ENCODE measurements at regions of chr12 and their contacts with region 1.

Region 1: DNA sequence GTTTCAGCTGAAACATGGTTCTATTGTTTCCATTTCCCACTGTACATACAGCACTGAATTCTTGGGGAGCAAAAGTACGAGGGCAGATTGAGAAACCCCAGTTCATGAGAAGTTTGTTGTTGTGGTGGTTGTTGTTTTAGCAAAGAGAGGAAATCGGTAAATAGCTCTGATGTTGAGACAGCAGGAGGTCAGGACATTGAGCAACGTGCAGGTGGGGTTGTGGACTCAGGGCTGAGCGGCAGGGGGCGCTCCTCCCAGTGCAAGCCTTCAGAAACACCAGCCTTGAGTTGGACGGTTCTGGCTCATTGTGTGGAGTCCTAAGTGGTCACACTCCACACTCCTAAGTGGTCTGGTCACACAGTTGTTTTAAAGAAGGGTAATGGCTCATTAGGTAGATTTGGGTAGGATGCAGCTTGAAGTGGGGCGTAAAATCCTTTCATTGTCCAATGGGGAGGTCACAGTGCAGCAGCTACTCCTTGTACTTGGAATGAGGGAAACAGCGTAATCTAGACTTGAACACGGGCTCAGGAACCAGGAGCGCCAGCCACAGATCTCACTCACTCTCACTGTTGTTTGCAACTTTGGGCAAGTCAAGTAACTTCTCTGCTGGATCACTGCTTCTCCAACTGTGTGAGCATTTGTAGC is 14.5 kb upstream of the PWP1 start:
- DNase-seq: peak; percentile 46
- CTCF ChIP-seq: peak; percentile 69

Region 2: GRCh38 chr12:107545737-107546353 is 125.3 kb before region 1 on chr12:
- CTCF ChIA-PET with region 1: no interaction called
- POLR2A ChIA-PET with region 1: no interaction called
- DNase-seq: no peak
- CTCF ChIP-seq: no peak

Region 3: GRCh38 chr12:107570721-107571120 is 100.4 kb before region 1 on chr12:
- CTCF ChIA-PET with region 1: no interaction called
- POLR2A ChIA-PET with region 1: no interaction called
- DNase-seq: no peak
- CTCF ChIP-seq: no peak

Region 4: GRCh38 chr12:107655281-107656065 is 15.6 kb before region 1 on chr12:
- CTCF ChIA-PET with region 1: interaction called, 15 read pairs
- POLR2A ChIA-PET with region 1: no interaction called
- DNase-seq: no peak
- CTCF ChIP-seq: no peak

Region 5: GRCh38 chr12:107685360-107686248 is 14.5 kb after region 1 on chr12 and contains the start of gene PWP1:
- CTCF ChIA-PET with region 1: interaction called, 32 read pairs
- POLR2A ChIA-PET with region 1: no interaction called
- DNase-seq: peak; percentile 97
- CTCF ChIP-seq: no peak

Region 6: DNA sequence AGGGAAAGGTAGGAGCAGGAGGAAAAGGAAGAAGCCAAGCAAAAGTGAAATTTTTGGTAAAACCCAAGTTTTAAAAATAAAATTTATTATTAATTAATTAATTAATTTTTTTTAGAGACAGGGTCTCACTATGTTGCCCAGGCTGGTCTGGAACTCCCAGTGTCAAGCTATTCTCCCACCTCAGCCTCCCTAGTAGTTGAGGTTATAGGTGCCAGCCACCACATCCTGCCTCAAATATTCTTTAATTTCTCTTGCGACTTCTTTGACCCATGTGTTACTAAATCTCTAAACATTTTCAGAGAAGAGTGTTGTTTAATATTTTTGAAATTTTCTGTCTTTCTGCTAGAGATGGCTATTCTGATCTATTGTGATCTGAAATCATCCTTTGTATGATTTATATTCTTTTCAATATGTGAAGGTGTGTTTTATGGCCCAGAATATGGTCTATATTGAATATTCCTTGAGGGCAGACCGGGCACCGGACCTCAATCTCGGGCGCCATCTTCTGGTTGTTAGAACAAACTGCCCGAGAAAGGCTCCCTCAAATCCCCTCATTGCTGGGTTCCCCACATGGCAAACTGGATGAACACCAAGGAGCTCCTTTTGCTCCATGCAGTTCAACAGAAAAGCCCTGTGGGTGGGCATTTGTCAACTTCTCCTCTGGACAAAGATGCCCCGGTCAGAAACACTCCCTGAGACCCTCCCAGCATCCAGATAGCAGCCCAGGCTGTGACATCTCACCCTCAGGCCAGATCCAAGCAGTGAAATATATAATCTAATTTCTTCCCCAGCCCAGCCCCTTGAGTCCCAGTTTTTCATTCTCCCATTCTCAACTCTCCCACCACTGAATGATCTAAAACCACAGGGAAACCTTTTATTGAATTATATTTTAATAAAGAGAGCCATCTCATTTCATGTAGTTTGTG is 213.9 kb after region 1 on chr12:
- CTCF ChIA-PET with region 1: interaction called, 229 read pairs
- POLR2A ChIA-PET with region 1: no interaction called
- DNase-seq: peak; percentile 70
- CTCF ChIP-seq: peak; percentile 70

Region 7: GRCh38 chr12:107903341-107904061 is 232.4 kb after region 1 on chr12:
- CTCF ChIA-PET with region 1: interaction called, 10 read pairs
- POLR2A ChIA-PET with region 1: no interaction called
- DNase-seq: peak; percentile 90
- CTCF ChIP-seq: no peak

Region 8: DNA sequence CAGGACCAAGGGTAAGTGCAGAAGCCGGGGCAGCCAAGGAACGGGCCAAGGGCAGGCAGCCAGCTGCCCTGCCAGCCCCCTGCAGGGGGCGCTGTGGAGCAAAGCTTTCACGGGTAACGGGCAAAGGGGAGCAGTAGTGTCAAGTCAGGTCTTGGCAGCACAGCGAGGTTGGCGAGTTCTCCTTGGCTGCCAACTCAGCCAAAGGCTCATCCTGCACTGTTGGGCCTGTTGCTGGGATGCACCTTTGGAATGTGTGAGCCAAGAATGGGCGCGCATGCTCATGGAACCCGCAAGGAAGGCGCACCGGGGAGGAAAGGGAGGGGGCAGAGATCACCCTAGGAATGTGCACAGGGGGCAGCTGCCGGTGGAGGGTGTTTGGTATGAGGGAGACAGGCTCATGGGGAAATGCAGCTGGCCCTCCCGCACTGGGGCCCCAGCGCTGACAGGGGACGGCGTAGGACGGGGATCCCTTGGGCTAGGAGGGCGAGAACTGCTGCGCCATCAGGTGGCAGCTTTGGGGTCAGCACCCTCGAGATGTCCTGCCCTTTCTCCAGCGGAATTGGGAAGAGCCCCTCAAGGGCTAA is 241.4 kb after region 1 on chr12:
- CTCF ChIA-PET with region 1: interaction called, 39 read pairs
- POLR2A ChIA-PET with region 1: no interaction called
- DNase-seq: peak; percentile 82
- CTCF ChIP-seq: peak; percentile 91